ENCODE measurements at regions of chr2 and their contacts with region 1.

Region 1: GRCh38 chr2:44955593-44956392 is 14.3 kb downstream of the SIX3 start:
- DNase-seq: peak; percentile 81
- ATAC-seq: peak; percentile 94

Region 2: DNA sequence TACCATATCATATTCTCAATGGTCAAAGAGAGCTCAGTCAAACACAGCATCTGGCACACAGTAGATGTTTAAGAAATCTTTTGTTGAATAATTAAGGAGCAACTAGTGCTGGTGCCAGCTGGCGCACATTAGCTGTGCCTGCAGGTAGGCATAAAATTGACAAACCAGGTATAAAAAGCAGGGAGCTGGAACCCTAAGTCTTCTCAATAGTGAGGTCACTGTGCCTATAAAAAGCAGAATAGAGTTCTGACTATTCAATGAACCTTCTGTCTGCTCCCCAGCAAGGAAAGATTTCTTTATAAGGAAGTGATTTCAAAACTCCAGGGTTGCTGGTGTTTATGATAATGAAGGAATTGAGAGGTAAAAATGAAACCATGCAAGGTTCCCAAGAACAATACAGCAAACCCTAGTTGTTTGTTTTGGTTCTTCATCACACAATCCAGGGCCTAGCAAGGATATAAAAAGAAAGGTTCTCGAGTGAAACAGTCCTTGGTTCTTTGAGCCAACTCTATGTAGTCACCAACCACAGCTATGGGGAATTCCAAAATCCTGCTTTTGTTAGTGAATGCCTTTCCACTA is 1436.1 kb before region 1 on chr2:
- intact Hi-C with region 1: no loop called
- DNase-seq: no peak
- ATAC-seq: no peak

Region 3: GRCh38 chr2:44244129-44244871 is 711.5 kb before region 1 on chr2:
- intact Hi-C with region 1: loop called (anchors 10 kb)
- DNase-seq: peak; percentile 56
- ATAC-seq: peak; percentile 94

Region 4: GRCh38 chr2:44392338-44392943 is 563.4 kb before region 1 on chr2:
- intact Hi-C with region 1: loop called (anchors 5 kb)
- DNase-seq: no peak
- ATAC-seq: no peak

Region 5: GRCh38 chr2:44479122-44479887 is 476.5 kb before region 1 on chr2:
- intact Hi-C with region 1: loop called (anchors 2 kb)
- DNase-seq: no peak
- ATAC-seq: peak; percentile 96

Measured in Right ventricle myocardium superior (tissue), 1 donor.